Gastrocnemius medialis (tissue), 4 donors: ENCODE measurements at regions of chr16 and their contacts with region 1.

Region 1: DNA sequence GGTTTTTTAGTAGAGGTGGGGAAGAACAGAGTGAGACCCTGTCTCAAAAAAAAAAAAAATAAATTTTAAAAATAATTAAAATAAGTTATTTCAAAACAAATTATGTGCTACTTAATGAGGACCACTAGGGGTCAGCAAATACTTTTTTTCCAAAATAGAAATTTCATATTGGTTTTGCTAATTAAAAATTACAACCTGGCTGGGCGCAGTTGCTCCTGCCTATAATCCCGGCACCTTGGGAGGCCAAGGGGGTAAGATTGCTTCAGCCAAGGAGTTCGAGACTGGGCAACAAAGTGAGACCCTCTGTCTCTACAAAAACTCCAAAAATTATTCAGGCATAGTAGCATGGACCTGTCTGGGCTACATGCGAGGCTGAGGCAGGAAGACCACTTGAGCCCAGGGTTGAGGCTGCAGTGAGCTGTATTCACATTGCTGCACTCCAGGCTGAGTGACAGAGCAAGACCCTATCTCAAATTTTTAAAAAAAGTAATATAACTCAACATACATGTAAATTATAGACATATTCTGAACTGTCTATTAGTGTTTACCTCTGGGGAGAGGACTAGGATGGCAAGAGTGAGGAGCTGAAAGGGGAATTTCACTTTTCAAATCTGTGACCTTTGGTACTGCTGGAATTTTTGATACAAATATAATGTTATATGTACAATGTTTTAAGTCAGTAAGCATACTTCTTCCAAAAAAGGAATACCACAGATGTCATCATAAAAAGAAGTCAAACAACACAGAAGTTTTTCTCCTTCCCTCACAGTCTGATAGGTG is 8.1 kb downstream of the MEIOB start:
- DNase-seq: no peak
- ATAC-seq: no peak
- H3K4me3 ChIP-seq: no peak overlapping the region
- H3K27ac ChIP-seq: no peak overlapping the region
- H3K4me1 ChIP-seq: peaks cover 0 to 4% of the 10 kb centered on the region in 2 donors
- H3K27me3 ChIP-seq: peaks cover 14 to 30% (median 30%) of the 10 kb centered on the region in 3 donors
- CTCF ChIP-seq: peak in 3 of 5 experiments; percentile 48 to 69 (median 57)
- POLR2A ChIP-seq: no peak

Region 2: GRCh38 chr16:1929578-1930337 is 65.9 kb after region 1 on chr16:
- in situ Hi-C with region 1: loop called in 2 of 4 experiments (anchors 5 kb)
- intact Hi-C with region 1: loop called (anchors 1 kb)
- DNase-seq: peak; percentile 74 to 84
- ATAC-seq: peak; percentile 85 to 87
- H3K4me3 ChIP-seq: peak overlapping the region; percentile 49 to 69 (median 66)
- H3K27ac ChIP-seq: peak overlapping the region; percentile 52 to 83 (median 76)
- H3K4me1 ChIP-seq: no peaks in the 10 kb centered on the region
- H3K27me3 ChIP-seq: no peaks in the 10 kb centered on the region
- CTCF ChIP-seq: peak in 4 of 5 experiments; percentile 100
- POLR2A ChIP-seq: peak; percentile 17 to 31